ENCODE measurements at regions of chr1 and their contacts with region 1.

Region 1: GRCh38 chr1:71264039-71264438 is 183.2 kb upstream of the ZRANB2 start:
- DNase-seq: no peak
- H3K27ac ChIP-seq: no peak overlapping the region
- CTCF ChIP-seq: no peak

Region 2: DNA sequence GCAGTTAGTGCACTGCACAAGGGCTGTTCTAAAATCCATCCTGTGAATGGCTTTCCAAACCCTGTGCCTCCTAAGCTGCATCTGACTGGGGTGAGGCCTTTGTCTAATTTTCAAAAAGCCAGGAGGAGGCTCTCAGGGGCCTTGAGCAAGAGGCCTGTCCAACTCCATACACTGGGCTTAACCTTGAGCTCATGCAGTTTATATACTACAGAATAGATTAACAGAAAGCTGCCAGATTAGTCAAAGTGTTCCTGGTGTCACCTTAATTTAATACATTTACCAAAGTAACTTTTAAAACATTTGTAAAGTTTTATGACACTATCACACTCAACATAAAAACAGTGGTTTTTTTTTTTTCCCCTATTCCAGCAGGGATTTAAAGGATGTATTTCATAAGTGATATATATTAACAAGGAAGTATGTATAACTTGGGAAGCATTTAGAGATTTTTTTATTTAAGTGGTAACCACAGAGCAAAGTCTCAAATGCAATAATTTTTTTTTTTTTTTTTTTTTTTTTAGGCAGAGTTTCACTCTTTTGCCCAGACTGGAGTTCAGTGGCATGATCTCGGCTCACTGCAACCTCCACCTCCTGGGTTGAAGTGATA is 829.7 kb before region 1 on chr1:
- CTCF ChIA-PET with region 1: interaction called, 11 read pairs
- POLR2A ChIA-PET with region 1: no interaction called
- DNase-seq: no peak
- H3K27ac ChIP-seq: no peak overlapping the region
- CTCF ChIP-seq: no peak

Region 3: GRCh38 chr1:71390518-71390917 is 126.5 kb after region 1 on chr1:
- CTCF ChIA-PET with region 1: no interaction called
- POLR2A ChIA-PET with region 1: no interaction called
- DNase-seq: no peak
- H3K27ac ChIP-seq: no peak overlapping the region
- CTCF ChIP-seq: no peak

Measured in RWPE1 (cell line).